Activated T-helper 2 cell treated with anti-CD3 and anti-CD28 coated beads, Interferon-gamma antibody, Interleukin-2, Interleukin-4, amounts not matched to agents 10 μg/mL and 5 μg/mL and 100 μg/mL, durations not matched to agents 14 hours and 24 hours and 36 hours (primary cell): ENCODE measurements at regions of chr2 and their contacts with region 1.

Region 1: GRCh38 chr2:215749092-215749957 is 264.0 kb downstream of the MREG start:
- DNase-seq: no peak
- H3K4me3 Mint-ChIP-seq: no peak overlapping the region
- H3K27ac Mint-ChIP-seq: peak overlapping the region; percentile 56
- H3K4me1 Mint-ChIP-seq: peaks cover 64% of the 10 kb centered on the region
- H3K27me3 Mint-ChIP-seq: no peaks in the 10 kb centered on the region

Region 2: DNA sequence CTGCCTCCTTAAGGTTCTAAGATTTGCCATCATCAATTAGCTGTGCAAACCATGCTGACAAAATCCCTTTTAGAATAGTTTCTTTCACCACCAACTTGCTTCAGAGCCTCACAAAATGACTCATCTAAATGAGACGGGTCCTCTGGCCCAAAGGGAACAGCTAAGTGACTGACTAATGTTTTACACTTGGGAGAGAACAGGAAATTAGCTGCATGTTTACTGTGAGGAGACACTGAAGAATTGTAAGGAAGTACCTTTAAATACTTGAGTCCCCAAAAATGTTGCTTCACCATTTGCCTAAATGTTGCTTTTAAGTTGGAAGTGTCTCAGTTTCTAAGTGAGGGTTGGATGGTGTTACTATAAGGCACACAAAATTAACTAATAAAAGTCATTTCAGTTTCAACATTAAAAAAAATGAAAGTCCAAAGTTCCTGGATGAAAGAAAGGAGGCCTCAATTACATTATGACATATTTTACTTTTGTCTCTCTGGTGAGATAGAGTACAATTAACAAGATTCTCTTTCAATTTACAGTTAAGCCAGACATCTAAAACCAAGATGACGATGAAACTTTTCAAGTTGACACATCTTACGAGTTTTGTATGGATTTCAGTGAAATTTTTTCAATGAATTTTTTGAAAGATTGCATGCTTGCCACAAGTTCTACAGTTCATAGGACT is 84.3 kb before region 1 on chr2:
- intact Hi-C with region 1: loop called (anchors 2 kb)
- DNase-seq: no peak
- H3K4me3 Mint-ChIP-seq: no peak overlapping the region
- H3K27ac Mint-ChIP-seq: peak overlapping the region; percentile 24
- H3K4me1 Mint-ChIP-seq: peaks cover 15% of the 10 kb centered on the region
- H3K27me3 Mint-ChIP-seq: peaks cover 1% of the 10 kb centered on the region

Region 3: DNA sequence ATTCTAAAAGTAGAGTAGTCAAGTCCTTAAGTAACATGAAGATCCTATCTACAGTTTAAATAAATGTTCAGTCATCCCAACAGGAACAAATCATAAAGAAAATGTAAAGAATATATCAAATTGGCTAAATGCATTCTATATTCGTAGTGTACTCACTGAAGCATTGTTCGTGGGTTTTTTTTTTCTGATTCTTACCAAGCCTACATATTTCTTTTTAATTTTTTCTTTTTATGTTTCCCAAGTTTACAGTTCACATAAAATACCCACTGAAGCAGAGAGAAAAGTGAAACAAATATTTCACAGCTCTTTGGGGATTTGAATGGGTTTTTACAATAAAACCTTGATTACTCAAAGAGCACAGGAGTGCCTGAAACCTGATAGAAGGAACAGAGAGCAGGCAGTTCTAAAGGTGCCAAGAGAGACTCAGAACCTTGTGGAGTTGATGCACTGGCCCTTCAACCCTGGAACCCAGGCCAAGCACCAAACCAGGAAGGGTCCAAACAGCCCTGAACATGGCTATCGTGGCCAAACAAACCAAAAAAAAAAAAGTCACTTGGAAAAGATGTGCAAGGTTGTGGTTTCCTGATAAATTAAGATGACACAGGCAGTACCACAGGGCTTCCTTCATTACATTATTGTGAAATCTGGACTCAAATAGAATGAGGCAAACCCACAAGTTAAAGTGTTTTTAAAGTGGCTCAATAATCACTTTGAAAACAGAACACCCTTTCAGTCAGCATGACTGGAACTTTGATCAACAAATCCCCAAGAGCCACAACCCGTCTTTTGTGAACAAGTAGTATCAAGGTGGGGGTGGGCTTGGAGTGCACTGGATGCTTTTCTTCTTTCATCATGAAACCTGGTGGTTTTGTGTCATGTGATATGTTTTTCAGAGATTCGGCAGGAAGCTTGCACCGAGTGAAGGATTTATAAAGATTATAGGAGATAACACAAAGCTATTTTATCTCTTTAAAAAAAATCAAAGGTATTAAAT is 68.4 kb before region 1 on chr2:
- intact Hi-C with region 1: loop called (anchors 1 kb)
- DNase-seq: peak; percentile 40
- H3K4me3 Mint-ChIP-seq: peak overlapping the region; percentile 47
- H3K27ac Mint-ChIP-seq: peak overlapping the region; percentile 88
- H3K4me1 Mint-ChIP-seq: peaks cover 39% of the 10 kb centered on the region
- H3K27me3 Mint-ChIP-seq: no peaks in the 10 kb centered on the region

Region 4: GRCh38 chr2:215764441-215765048 is 15.2 kb after region 1 on chr2:
- intact Hi-C with region 1: loop called (anchors 1 kb)
- DNase-seq: no peak
- H3K4me3 Mint-ChIP-seq: no peak overlapping the region
- H3K27ac Mint-ChIP-seq: no peak overlapping the region
- H3K4me1 Mint-ChIP-seq: peaks cover 23% of the 10 kb centered on the region
- H3K27me3 Mint-ChIP-seq: peaks cover 1% of the 10 kb centered on the region

Region 5: GRCh38 chr2:215796140-215796855 is 47.0 kb after region 1 on chr2:
- intact Hi-C with region 1: loop called (anchors 1 kb)
- DNase-seq: no peak
- H3K4me3 Mint-ChIP-seq: no peak overlapping the region
- H3K27ac Mint-ChIP-seq: peak overlapping the region; percentile 26
- H3K4me1 Mint-ChIP-seq: peaks cover 27% of the 10 kb centered on the region
- H3K27me3 Mint-ChIP-seq: no peaks in the 10 kb centered on the region

Region 6: GRCh38 chr2:215920244-215921100 is 171.1 kb after region 1 on chr2:
- intact Hi-C with region 1: loop called (anchors 10 kb)
- DNase-seq: peak; percentile 38
- H3K4me3 Mint-ChIP-seq: no peak overlapping the region
- H3K27ac Mint-ChIP-seq: no peak overlapping the region
- H3K4me1 Mint-ChIP-seq: peaks cover 21% of the 10 kb centered on the region
- H3K27me3 Mint-ChIP-seq: no peaks in the 10 kb centered on the region

Region 7: GRCh38 chr2:216013080-216013909 is 264.0 kb after region 1 on chr2 and contains the start of gene MREG:
- intact Hi-C with region 1: loop called (anchors 10 kb)
- DNase-seq: peak; percentile 79
- H3K4me3 Mint-ChIP-seq: peak within 1 kb of the TSS; percentile 90
- H3K27ac Mint-ChIP-seq: peak within 1 kb of the TSS; percentile 62
- H3K4me1 Mint-ChIP-seq: peaks cover 51% of the 10 kb centered on the region
- H3K27me3 Mint-ChIP-seq: no peaks in the 10 kb centered on the region
- total RNA-seq, gene MREG: 15.3 and 15.7 TPM in 2 replicates